Motor neuron (in vitro differentiated cells): ENCODE measurements at regions of chr22 and their contacts with region 1.

Region 1: GRCh38 chr22:42649246-42650099 is at the start of gene CYB5R3:
- ATAC-seq: peak; percentile 74 to 94 (median 82)
- H3K4me3 ChIP-seq: peak within 1 kb of the TSS; percentile 65 to 95 (median 82)
- H3K27ac ChIP-seq: peak within 1 kb of the TSS; percentile 61 to 75
- H3K4me1 ChIP-seq: peaks cover 3 to 15% of the 10 kb centered on the region in 2 donors
- total RNA-seq, gene CYB5R3: 19.7 to 89.0 (median 54.0) TPM

Region 2: DNA sequence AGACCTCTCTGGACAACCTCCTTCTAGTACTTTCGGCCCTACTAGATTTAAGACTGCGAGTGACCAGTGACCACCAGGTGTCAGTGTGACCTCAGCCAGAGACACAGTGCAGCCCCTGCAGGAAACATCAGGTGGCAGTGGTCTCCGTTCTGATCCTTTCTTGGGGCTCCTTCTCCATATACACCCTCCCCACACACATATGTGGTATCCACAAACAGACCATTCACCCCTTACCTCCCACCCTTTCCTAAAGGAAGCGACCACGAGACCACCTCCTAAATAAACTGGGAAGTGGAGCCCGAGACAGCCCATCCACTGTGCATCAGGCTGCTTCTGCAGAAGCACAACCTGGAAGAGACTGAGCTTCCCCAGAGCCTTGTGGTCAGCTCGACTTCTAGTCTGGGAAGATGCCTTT is 480.4 kb before region 1 on chr22:
- in situ Hi-C with region 1: no loop called
- ATAC-seq: peak; percentile 68 to 90 (median 78)
- H3K4me3 ChIP-seq: no peak overlapping the region
- H3K27ac ChIP-seq: no peak overlapping the region
- H3K4me1 ChIP-seq: peaks cover 39 to 49% of the 10 kb centered on the region in 2 donors

Region 3: DNA sequence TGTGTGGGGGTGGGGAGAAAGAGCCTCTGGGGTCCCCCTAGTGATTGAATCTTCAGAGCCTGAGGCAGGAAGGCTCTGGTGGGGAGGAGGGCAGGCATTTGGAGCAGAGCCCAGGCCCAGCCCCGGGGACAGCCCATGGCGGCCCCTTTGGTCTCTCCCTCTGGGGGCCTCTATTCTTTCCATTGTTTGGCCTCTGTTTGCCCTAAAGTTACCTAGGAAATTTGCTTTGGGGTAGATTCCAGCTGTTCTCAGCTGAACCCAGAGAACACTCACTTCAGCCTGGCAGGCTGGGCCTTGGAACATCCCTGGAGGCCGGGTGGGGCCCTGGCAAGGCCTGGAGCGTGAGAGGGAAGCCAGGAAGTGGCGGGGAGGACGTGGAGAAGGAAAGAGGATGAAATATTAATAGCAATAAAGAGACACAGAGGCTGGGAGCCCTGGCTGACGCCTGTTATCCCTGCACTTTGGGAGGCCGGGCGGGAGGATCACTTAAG is 94.1 kb after region 1 on chr22:
- in situ Hi-C with region 1: no loop called
- ATAC-seq: peak; percentile 26 to 88 (median 70)
- H3K4me3 ChIP-seq: no peak overlapping the region
- H3K27ac ChIP-seq: no peak overlapping the region
- H3K4me1 ChIP-seq: no peaks in the 10 kb centered on the region

Region 4: DNA sequence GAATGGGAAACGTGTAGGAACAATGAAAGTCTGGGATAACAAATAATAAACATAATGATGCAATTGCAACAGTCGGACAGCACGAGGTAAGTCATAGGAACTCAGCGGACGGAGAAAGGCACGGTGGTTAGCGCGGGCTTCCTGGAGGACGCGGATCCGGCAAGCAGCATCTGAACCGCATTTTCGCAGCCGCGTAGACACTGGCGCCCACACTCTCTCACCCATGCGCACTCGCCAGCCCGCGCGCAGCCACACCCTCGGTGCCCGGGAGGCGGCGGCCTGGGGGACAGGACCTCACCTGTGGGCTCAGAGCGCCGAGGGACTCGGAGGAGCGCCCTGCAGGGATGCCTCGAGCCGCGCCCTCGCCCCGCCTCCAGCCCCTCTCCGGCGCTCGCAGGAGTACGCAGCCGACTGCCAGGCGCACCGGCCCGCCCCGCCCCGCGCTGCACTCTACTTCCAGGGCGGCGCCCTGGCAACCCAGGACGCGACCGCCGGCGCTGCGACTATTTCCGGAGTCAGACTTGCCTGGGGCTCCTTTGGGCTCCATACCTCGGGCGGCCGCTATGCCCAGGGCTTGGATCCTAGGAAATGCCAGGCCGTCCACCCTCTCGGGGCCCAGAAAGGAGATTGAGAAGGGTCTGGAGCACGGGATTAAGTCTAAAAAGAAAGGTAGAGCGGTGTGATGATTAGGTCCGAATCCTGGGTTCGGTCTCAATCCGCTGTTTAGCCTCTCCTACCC is 439.7 kb after region 1 on chr22 and contains the start of gene TTLL1:
- in situ Hi-C with region 1: loop called in 1 of 9 experiments (anchors 25 kb)
- ATAC-seq: peak; percentile 88 to 99 (median 97)
- H3K4me3 ChIP-seq: peak within 1 kb of the TSS; percentile 51 to 70 (median 53)
- H3K27ac ChIP-seq: peak within 1 kb of the TSS; percentile 10 to 47
- H3K4me1 ChIP-seq: no peaks in the 10 kb centered on the region
- total RNA-seq, gene TTLL1: 5.1 to 34.1 (median 15.6) TPM